ENCODE measurements at regions of chr20 and their contacts with region 1.

Region 1: GRCh38 chr20:32652739-32653526 is 20.8 kb downstream of the C20orf203 start:
- DNase-seq: peak; percentile 75 to 90 (median 83)
- H3K4me3 ChIP-seq: no peak overlapping the region
- H3K4me3 Mint-ChIP-seq: peak overlapping the region in 2 of 7 donors; percentile 26 to 37
- H3K27ac ChIP-seq: no peak overlapping the region
- H3K27ac Mint-ChIP-seq: peak overlapping the region in 2 of 8 donors; percentile 43 to 47
- H3K4me1 ChIP-seq: peaks cover 6% of the 10 kb centered on the region
- H3K4me1 Mint-ChIP-seq: peaks cover 5 to 11% (median 8%) of the 10 kb centered on the region in 3 donors
- H3K27me3 ChIP-seq: no peaks in the 10 kb centered on the region
- H3K27me3 Mint-ChIP-seq: no peaks in the 10 kb centered on the region

Region 2: DNA sequence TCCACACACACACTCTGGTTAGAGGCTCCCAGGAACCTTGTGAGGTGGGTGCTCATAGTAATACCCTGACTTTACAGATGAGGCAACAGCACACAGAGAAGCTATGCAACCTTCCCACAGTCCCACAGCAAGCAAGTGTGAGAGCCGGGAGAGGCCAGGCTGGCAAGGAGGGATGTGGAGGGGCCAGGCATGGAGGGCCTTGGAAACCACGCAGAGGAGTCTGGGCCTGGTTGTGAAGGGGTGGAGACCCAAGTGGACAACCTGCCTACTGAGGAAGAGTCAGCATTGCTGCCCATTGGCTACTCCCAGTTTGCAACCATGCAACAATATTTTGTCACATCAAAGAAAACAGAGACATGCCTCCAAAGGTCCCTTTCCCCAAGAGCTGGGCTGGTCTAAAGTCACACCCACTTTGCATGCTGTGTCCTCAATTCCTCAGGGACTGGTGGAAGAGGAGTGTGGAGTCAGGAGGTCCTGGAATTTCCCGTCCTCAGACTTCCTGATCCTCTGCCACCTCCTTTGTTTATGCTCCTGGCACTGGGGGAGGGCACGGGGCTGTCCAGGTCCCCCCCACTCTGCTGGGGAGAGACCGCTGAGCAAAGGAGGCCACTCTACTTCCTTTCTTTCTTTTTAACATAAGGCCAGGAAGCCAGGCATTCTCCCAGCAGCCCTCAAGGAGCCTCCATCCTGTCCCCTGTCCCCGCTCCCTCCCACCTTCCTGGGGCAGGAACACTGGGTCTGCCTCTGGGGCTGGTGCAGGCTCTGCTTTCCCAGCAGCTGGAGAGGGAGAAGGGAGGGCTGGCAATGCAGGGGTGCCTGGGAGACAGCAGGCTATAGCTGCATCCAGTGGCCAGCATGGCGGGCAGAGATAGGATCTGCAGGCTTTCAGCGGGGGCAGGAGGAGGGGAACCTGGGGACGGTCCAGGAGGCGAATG is 136.1 kb before region 1 on chr20:
- CTCF ChIA-PET with region 1: interaction called, 186 read pairs
- POLR2A ChIA-PET with region 1: no interaction called
- DNase-seq: peak in 1 of 5 donors; percentile 34
- H3K4me3 ChIP-seq: no peak overlapping the region
- H3K4me3 Mint-ChIP-seq: no peak overlapping the region
- H3K27ac ChIP-seq: no peak overlapping the region
- H3K27ac Mint-ChIP-seq: peak overlapping the region in 5 of 8 donors; percentile 52 to 88 (median 68)
- H3K4me1 ChIP-seq: peaks cover 64% of the 10 kb centered on the region
- H3K4me1 Mint-ChIP-seq: peaks cover 50 to 57% (median 54%) of the 10 kb centered on the region in 3 donors
- H3K27me3 ChIP-seq: no peaks in the 10 kb centered on the region
- H3K27me3 Mint-ChIP-seq: no peaks in the 10 kb centered on the region

Region 3: GRCh38 chr20:32535953-32536823 is 116.7 kb before region 1 on chr20:
- CTCF ChIA-PET with region 1: interaction called, 28 read pairs
- POLR2A ChIA-PET with region 1: no interaction called
- DNase-seq: peak; percentile 73 to 91 (median 75)
- H3K4me3 ChIP-seq: peak overlapping the region; percentile 54
- H3K4me3 Mint-ChIP-seq: peak overlapping the region; percentile 77 to 95 (median 85)
- H3K27ac ChIP-seq: peak overlapping the region; percentile 75
- H3K27ac Mint-ChIP-seq: peak overlapping the region; percentile 90 to 100 (median 97)
- H3K4me1 ChIP-seq: peaks cover 84% of the 10 kb centered on the region
- H3K4me1 Mint-ChIP-seq: peaks cover 80 to 89% (median 89%) of the 10 kb centered on the region in 3 donors
- H3K27me3 ChIP-seq: no peaks in the 10 kb centered on the region
- H3K27me3 Mint-ChIP-seq: peaks cover 0 to 3% of the 10 kb centered on the region in 2 donors

Region 4: DNA sequence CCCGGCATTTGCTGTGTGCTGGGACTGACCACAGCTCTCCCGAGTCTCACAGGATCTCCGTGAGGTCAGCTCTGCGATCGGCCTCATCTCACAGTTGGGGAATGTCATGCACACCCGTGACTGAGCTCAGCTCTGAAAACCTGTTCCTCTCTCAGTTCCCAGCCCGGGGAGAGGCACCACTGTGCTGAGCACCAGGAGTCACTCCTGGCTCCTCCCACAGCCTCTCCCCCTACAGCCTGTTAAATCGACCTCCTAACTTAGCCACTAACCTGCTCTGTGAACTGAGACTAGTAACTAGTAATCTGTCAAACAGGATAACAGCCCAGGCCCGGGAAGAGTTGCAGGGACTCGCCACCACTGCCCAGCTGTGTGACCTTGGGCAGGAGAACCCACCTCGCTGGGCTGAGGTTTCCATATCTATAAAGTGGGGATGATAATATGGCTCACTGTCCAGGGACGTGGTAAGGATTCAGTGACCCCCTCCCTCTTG is 47.7 kb before region 1 on chr20:
- CTCF ChIA-PET with region 1: no interaction called
- POLR2A ChIA-PET with region 1: no interaction called
- DNase-seq: no peak
- H3K4me3 ChIP-seq: no peak overlapping the region
- H3K4me3 Mint-ChIP-seq: no peak overlapping the region
- H3K27ac ChIP-seq: no peak overlapping the region
- H3K27ac Mint-ChIP-seq: no peak overlapping the region
- H3K4me1 ChIP-seq: no peaks in the 10 kb centered on the region
- H3K4me1 Mint-ChIP-seq: peaks cover 0 to 3% (median 2%) of the 10 kb centered on the region in 3 donors
- H3K27me3 ChIP-seq: no peaks in the 10 kb centered on the region
- H3K27me3 Mint-ChIP-seq: peaks cover 6 to 12% of the 10 kb centered on the region in 2 donors

Region 5: DNA sequence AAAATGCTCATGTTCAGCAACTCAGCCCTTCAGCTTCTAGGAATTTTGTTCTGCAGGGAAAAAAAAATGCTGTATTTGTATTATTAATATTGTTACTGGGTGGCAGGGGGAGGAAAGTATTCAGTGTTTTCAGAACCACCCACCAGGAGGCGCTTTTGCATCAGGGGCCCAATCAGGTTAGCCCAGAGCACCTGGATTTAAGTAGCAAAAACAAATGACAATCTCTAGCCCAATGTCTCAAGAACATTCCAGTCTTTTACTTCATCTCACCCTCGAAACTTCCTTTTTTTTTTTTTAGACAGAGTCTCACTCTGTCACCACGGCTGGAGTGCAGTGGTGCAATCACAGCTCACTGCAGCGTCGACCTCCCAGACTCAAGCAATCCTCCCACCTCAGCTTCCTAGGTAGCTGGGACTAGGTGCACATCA is 21.4 kb after region 1 on chr20:
- CTCF ChIA-PET with region 1: interaction called, 13 read pairs
- POLR2A ChIA-PET with region 1: no interaction called
- DNase-seq: peak; percentile 43 to 69 (median 56)
- H3K4me3 ChIP-seq: no peak overlapping the region
- H3K4me3 Mint-ChIP-seq: no peak overlapping the region
- H3K27ac ChIP-seq: no peak overlapping the region
- H3K27ac Mint-ChIP-seq: peak overlapping the region in 2 of 8 donors; percentile 17 to 23
- H3K4me1 ChIP-seq: peaks cover 28% of the 10 kb centered on the region
- H3K4me1 Mint-ChIP-seq: peaks cover 17 to 27% (median 18%) of the 10 kb centered on the region in 3 donors
- H3K27me3 ChIP-seq: no peaks in the 10 kb centered on the region
- H3K27me3 Mint-ChIP-seq: peaks cover 0 to 3% of the 10 kb centered on the region in 2 donors

Region 6: GRCh38 chr20:32737371-32738223 is 84.7 kb after region 1 on chr20:
- CTCF ChIA-PET with region 1: no interaction called
- POLR2A ChIA-PET with region 1: no interaction called
- DNase-seq: peak in 3 of 5 donors; percentile 56 to 64 (median 58)
- H3K4me3 ChIP-seq: peak overlapping the region; percentile 6
- H3K4me3 Mint-ChIP-seq: peak overlapping the region; percentile 41 to 80 (median 64)
- H3K27ac ChIP-seq: peak overlapping the region; percentile 18
- H3K27ac Mint-ChIP-seq: peak overlapping the region; percentile 84 to 96 (median 92)
- H3K4me1 ChIP-seq: peaks cover 54% of the 10 kb centered on the region
- H3K4me1 Mint-ChIP-seq: peaks cover 33 to 63% (median 51%) of the 10 kb centered on the region in 3 donors
- H3K27me3 ChIP-seq: no peaks in the 10 kb centered on the region
- H3K27me3 Mint-ChIP-seq: peaks cover 0 to 2% of the 10 kb centered on the region in 2 donors